ENCODE measurements at regions of chr11 and their contacts with region 1.

Region 1: DNA sequence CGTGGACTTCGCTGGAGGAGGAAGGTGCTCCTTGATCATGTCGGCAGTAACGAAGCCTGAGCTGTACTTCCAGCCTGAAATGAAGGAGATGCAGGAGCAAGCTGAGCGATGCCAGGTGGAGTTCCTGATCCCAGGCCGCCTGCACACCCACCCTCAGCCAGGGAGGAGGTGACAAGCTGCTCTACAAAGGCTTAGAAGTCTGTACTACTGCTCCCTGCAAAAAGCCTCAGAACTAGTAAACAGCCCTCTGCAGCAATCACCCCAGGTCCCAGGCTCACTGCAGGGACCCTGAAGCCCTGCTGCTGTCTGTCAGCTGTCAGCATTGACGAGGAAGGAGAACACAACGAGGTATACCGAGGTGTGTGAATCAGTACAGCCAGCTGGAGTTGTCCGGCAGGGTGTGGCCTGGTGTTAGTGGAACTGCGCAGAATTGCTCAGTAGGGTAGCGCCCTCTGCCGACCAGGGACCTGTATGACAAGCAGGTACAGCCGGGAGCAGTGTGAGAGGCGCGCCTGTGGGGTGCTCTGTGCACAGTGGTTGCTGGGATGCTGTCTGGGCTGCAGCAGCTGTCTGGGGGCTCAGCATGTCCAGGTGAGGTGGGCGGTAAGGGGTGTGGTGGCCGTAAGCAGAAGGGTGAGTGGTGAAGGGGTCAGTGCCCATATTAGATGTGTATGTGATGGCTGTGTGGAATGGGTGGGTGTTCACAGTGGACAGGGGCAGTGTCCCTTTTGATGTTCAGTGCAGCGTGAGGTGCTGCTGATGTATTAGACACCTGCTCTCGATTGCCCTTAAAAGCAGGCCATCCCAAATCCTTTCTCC is 7.6 kb downstream of the CYB5R2 start:
- DNase-seq: peak; percentile 51 to 94 (median 80)
- ATAC-seq: peak; percentile 100
- H3K4me3 ChIP-seq: no peak overlapping the region
- H3K27ac ChIP-seq: no peak overlapping the region
- H3K4me1 ChIP-seq: no peaks in the 10 kb centered on the region
- H3K27me3 ChIP-seq: no peaks in the 10 kb centered on the region
- CTCF ChIP-seq: peak; percentile 87 to 90

Region 2: GRCh38 chr11:7571640-7572000 is 94.1 kb before region 1 on chr11:
- intact Hi-C with region 1: loop called in 1 of 2 experiments (anchors 5 kb)
- DNase-seq: peak in 3 of 4 donors; percentile 55 to 88 (median 66)
- ATAC-seq: peak; percentile 85
- H3K4me3 ChIP-seq: no peak overlapping the region
- H3K27ac ChIP-seq: peak overlapping the region; percentile 24 to 60
- H3K4me1 ChIP-seq: peaks cover 16 to 35% of the 10 kb centered on the region in 2 donors
- H3K27me3 ChIP-seq: peaks cover 0 to 16% of the 10 kb centered on the region in 2 donors
- CTCF ChIP-seq: peak; percentile 84 to 96

Region 3: GRCh38 chr11:8092587-8093424 is 427.1 kb after region 1 on chr11:
- intact Hi-C with region 1: no loop called
- DNase-seq: peak in 2 of 4 donors; percentile 36 to 46
- ATAC-seq: peak; percentile 90
- H3K4me3 ChIP-seq: no peak overlapping the region
- H3K27ac ChIP-seq: no peak overlapping the region
- H3K4me1 ChIP-seq: no peaks in the 10 kb centered on the region
- H3K27me3 ChIP-seq: no peaks in the 10 kb centered on the region
- CTCF ChIP-seq: peak; percentile 44 to 55

Measured in left lung (tissue), 14 donors.